ENCODE measurements at regions of chr17 and their contacts with region 1.

Region 1: DNA sequence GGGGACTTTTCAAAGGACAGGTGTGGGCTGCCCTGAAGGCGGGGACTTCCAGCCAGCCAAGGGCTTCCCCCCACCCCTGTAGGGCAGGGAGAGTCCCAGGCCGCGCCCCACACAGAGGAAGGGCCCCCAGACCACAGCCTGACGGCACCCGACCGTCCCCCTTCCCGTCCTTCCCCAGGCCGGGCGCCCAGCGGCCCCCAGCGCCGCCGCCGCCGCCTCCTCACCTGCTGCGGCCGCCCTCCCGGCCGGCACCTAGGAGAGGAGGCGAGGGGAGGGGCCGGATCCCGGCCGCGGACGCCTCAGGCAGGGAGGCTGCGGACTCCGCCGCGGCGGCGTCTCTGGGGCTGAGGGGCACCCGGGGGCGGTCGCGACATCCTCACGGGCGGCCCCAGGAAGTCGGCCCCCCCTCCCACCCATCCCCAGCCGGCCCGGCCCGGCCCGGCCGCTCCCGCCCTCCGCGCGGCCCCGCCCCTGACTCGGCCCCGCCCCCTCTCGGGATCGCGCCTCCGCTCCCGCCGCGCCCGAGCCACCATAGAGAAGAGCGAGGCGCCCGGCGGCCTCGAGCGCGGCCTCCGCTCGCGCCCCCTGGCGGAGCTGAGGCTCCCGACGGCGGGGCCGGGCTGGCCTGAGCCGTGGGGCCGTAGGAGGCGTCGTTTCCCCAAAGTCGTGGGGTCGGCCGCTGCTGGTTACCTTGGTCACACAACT is 25.5 kb upstream of the RFFL start:
- DNase-seq: peak; percentile 73 to 95 (median 85)
- ATAC-seq: peak; percentile 79 to 87 (median 81)
- H3K4me3 ChIP-seq: peak overlapping the region; percentile 88 to 89
- H3K4me3 Mint-ChIP-seq: peak overlapping the region; percentile 94 to 95 (median 94)
- H3K27ac ChIP-seq: peak overlapping the region; percentile 98
- H3K27ac Mint-ChIP-seq: peak overlapping the region; percentile 96
- H3K4me1 ChIP-seq: peaks cover 17 to 33% of the 10 kb centered on the region in 2 experiments
- H3K4me1 Mint-ChIP-seq: peaks cover 47 to 54% (median 51%) of the 10 kb centered on the region in 3 donors
- H3K27me3 ChIP-seq: no peaks in the 10 kb centered on the region
- H3K27me3 Mint-ChIP-seq: no peaks in the 10 kb centered on the region

Region 2: GRCh38 chr17:34474706-34475105 is 614.3 kb before region 1 on chr17:
- CTCF ChIA-PET with region 1: no interaction called
- POLR2A ChIA-PET with region 1: no interaction called
- DNase-seq: no peak
- ATAC-seq: no peak
- H3K4me3 ChIP-seq: no peak overlapping the region
- H3K4me3 Mint-ChIP-seq: no peak overlapping the region
- H3K27ac ChIP-seq: no peak overlapping the region
- H3K27ac Mint-ChIP-seq: no peak overlapping the region
- H3K4me1 ChIP-seq: no peaks in the 10 kb centered on the region
- H3K4me1 Mint-ChIP-seq: no peaks in the 10 kb centered on the region
- H3K27me3 ChIP-seq: peaks cover 0 to 13% of the 10 kb centered on the region in 2 experiments
- H3K27me3 Mint-ChIP-seq: peaks cover 4 to 16% of the 10 kb centered on the region in 2 donors

Region 3: GRCh38 chr17:35022536-35023063 is 66.4 kb before region 1 on chr17:
- CTCF ChIA-PET with region 1: interaction called in 1 of 2 experiments, 15 read pairs
- POLR2A ChIA-PET with region 1: no interaction called
- DNase-seq: peak; percentile 41 to 81 (median 61)
- ATAC-seq: peak; percentile 98 to 100 (median 100)
- H3K4me3 ChIP-seq: no peak overlapping the region
- H3K4me3 Mint-ChIP-seq: peak overlapping the region; percentile 43 to 69 (median 56)
- H3K27ac ChIP-seq: peak overlapping the region; percentile 95
- H3K27ac Mint-ChIP-seq: peak overlapping the region; percentile 98 to 99
- H3K4me1 ChIP-seq: peaks cover 24 to 34% of the 10 kb centered on the region in 2 experiments
- H3K4me1 Mint-ChIP-seq: peaks cover 54 to 66% (median 58%) of the 10 kb centered on the region in 3 donors
- H3K27me3 ChIP-seq: no peaks in the 10 kb centered on the region
- H3K27me3 Mint-ChIP-seq: no peaks in the 10 kb centered on the region

Region 4: GRCh38 chr17:35046740-35047283 is 42.2 kb before region 1 on chr17:
- CTCF ChIA-PET with region 1: interaction called in 1 of 2 experiments, 12 read pairs
- POLR2A ChIA-PET with region 1: interaction called, 3 to 6 read pairs
- DNase-seq: peak in 34 of 35 experiments; percentile 18 to 83 (median 57)
- ATAC-seq: peak; percentile 70 to 78 (median 73)
- H3K4me3 ChIP-seq: peak overlapping the region; percentile 17 to 39
- H3K4me3 Mint-ChIP-seq: peak overlapping the region; percentile 72 to 77 (median 76)
- H3K27ac ChIP-seq: peak overlapping the region; percentile 84
- H3K27ac Mint-ChIP-seq: peak overlapping the region; percentile 94 to 98
- H3K4me1 ChIP-seq: peaks cover 55 to 83% of the 10 kb centered on the region in 2 experiments
- H3K4me1 Mint-ChIP-seq: peaks cover 78 to 84% (median 80%) of the 10 kb centered on the region in 3 donors
- H3K27me3 ChIP-seq: no peaks in the 10 kb centered on the region
- H3K27me3 Mint-ChIP-seq: no peaks in the 10 kb centered on the region